RWPE1 (cell line): ENCODE measurements at regions of chr15 and their contacts with region 1.

Region 1: GRCh38 chr15:36948982-36949381 is 151.4 kb downstream of the MEIS2 start:
- DNase-seq: no peak
- H3K27ac ChIP-seq: no peak overlapping the region
- CTCF ChIP-seq: no peak

Region 2: DNA sequence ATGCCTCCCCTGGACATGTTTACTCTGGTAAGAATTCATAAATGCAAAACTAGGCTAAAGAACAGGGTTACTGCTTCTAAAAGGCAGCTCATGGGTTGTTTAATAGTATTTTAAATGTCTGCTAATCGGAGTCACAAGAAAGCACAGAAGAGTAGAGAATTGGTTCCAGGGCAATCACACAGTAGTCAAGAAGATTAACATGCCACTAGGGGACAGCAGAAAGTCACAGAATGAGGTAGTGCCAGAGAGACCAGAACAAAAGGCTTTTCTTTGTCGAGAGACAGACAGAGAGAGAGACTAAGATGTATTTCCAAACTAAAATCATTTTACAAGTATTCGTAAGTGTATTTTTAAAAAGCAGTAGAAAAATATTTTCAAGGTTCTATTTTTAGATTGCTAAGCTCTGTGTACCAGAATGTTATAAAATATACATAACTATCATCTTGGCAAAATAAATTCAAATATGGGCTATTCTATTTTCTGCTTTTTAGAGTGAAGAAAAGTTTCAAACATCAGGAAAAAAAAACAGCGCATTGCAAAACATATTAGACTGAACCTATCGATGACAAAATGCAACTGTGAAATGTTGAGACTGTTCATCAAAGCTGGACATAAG is 447.8 kb before region 1 on chr15:
- CTCF ChIA-PET with region 1: interaction called, 10 read pairs
- POLR2A ChIA-PET with region 1: no interaction called
- DNase-seq: peak; percentile 45
- H3K27ac ChIP-seq: no peak overlapping the region
- CTCF ChIP-seq: peak; percentile 92

Region 3: DNA sequence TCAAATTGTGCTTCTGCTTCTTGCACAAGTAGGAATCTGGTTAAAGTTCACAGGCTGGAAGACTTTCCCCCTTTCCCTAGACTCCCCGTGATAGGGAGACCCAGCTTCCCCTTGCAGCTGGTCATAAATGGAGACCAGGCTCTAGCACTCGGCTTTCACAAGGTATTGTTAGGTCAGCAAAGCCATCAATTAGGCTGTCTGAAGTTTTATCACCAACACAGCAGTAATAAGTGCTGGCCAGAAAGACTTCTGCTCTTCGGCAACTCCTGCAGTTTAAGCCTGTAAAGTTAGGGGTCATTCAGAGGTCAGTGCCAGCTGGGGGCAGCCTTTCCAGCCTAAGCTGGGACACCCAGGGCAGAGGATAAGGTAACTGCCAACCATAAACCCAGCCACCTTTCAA is 52.0 kb before region 1 on chr15:
- CTCF ChIA-PET with region 1: no interaction called
- POLR2A ChIA-PET with region 1: no interaction called
- DNase-seq: no peak
- H3K27ac ChIP-seq: no peak overlapping the region
- CTCF ChIP-seq: no peak

Region 4: DNA sequence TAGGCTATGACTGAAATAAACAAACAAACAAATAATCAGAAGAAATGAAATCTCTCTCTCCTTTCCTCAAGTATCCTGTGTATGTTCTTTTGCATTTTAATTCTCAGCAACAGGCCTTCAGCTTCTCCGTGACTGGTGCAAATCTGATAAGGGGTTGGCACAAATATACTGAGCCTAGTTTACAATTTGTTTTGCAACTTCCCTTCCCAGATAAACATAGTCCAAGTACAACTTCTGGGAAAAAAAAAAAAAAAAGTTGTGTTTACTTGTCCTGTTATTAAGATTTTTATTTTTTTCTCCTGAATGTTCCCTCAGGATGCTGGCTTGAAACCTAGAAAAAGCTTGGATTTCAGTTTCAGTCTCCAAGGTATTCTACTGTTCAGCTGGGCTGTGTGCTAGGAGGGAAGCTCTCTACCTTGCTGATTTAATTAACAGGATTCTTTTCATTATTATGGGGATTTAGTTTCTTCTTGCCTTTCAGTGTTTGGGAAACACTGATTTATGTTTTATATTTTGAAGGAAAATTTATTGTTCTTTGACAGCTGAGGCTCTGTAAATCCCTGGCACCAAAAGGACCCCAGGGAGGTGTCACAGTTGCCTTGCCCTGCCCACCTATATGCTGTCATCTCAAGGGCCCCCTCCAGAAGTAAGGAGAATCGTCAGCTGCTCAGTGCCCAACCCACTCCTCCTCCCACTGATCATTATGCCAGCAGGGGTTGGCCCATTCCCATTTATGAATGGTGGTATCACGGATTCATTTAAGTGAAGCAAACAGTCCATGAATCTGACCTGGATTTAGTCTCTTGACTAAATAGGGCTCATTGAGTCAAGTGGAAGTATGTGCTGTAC is 33.8 kb before region 1 on chr15:
- CTCF ChIA-PET with region 1: no interaction called
- POLR2A ChIA-PET with region 1: no interaction called
- DNase-seq: no peak
- H3K27ac ChIP-seq: no peak overlapping the region
- CTCF ChIP-seq: no peak